ENCODE measurements at regions of chr2 and their contacts with region 1.

Region 1: GRCh38 chr2:73828818-73829570 is at the start of gene STAMBP:
- DNase-seq: peak; percentile 96 to 99 (median 98)
- ATAC-seq: peak; percentile 98 to 99
- H3K4me3 ChIP-seq: peak within 1 kb of the TSS; percentile 73
- H3K27ac ChIP-seq: peak within 1 kb of the TSS; percentile 93
- H3K4me1 ChIP-seq: peaks cover 3% of the 10 kb centered on the region
- H3K27me3 ChIP-seq: no peaks in the 10 kb centered on the region
- total RNA-seq, gene STAMBP: 33.6 to 48.0 (median 41.3) TPM

Region 2: DNA sequence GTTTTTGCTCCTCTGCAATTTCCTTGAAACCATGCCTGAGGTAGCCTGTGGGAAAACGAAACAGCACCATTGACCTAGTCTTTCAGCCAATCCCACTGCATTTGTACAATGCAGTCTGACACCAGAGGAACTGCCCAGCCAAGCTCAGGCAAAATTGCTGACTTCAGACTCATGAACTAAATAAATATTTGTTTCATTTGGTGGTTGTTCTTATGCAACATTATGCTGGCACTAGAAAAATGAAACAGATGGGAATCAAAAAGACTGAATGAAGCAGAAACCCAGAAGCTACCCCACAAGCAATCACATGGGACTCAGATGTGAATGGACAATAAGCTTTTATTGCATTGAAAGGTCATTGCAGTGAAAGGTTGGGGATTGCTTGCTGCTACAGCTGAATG is 188.5 kb before region 1 on chr2:
- intact Hi-C with region 1: no loop called
- DNase-seq: no peak
- ATAC-seq: peak; percentile 11 to 69
- H3K4me3 ChIP-seq: no peak overlapping the region
- H3K27ac ChIP-seq: no peak overlapping the region
- H3K4me1 ChIP-seq: no peaks in the 10 kb centered on the region
- H3K27me3 ChIP-seq: no peaks in the 10 kb centered on the region

Region 3: DNA sequence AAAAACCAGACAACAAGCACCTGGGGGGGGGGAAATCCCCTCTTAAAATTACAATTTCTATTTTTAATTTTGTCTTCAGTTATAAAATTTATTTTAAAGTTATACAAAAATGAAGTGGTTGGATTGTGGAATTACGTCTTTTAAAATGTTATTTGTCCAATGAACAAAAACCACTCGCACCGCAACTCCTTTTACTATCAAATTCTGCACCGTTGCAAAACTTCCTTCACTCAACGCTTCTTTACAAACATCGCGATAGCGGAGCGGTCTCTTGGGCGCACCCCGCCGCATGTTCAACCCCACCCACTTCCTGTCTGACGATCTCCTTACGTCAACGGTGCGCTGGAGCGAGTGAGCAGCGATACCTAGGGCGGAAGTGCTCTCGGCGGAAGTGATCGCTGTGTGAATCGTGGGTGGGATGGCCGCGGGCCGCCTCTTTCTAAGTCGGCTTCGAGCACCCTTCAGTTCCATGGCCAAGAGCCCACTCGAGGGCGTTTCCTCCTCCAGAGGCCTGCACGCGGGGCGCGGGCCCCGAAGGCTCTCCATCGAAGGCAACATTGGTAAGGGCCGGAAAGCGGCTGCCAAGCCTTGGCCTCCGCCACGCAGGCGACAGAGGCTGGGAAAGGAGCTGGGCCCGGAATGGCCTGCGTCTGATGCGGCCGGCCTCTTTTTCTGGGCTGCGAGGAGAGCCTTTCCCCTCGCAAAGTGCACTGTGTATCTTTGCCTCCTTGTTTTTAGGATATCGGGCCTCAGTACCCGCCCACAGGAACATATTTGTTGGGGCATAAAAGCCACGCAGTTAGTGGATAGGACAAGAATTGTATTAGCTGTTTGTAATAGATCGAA is 97.7 kb after region 1 on chr2 and contains the start of gene DGUOK:
- intact Hi-C with region 1: loop called in 1 of 4 experiments (anchors 10 kb)
- DNase-seq: peak; percentile 98 to 99 (median 98)
- ATAC-seq: peak; percentile 100
- H3K4me3 ChIP-seq: peak within 1 kb of the TSS; percentile 73
- H3K27ac ChIP-seq: peak within 1 kb of the TSS; percentile 84
- H3K4me1 ChIP-seq: peaks cover 8% of the 10 kb centered on the region
- H3K27me3 ChIP-seq: no peaks in the 10 kb centered on the region
- total RNA-seq, gene DGUOK: 20.2 to 29.0 (median 26.7) TPM

Region 4: DNA sequence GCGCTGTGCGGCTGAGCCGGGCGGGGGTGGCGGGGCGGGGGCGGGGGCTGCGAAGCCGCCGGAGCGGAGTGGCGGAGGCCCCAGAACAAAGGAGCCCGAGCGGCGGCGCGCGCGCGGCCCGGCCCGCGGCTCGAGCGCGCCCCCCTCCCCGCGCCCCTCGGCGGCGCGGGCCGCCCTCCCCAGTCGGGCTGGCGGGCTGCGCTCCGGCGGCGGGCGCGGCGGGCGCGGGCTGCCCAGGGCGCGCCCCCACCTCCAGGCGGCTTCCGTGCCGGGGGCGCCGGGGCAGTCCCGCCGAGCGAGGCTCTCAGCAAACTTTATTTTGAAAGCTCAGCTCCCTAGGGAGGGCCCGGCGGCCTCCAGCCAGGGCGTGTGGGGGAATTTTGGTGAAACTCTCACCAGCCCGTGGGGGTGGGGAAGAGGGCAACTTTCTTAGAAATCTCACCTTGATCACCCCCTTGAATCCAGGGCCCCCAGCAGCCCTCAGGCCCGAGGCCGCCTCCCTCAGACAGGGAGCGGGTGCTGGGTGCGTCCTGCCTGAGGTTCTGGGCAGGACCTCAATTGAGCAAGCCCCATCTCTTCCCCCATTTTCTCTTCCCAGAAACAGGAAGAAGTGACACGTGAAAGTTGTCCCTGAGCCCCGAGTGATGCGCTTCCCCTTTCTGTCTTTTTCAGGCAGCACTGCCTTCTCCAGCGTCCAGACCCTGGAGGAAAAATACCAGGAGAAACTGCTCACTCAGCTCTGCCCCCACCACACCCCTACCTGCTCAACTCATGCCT is 156.5 kb after region 1 on chr2:
- intact Hi-C with region 1: loop called in 1 of 4 experiments (anchors 10 kb)
- DNase-seq: peak; percentile 52 to 86 (median 83)
- ATAC-seq: peak; percentile 6 to 9
- H3K4me3 ChIP-seq: peak overlapping the region; percentile 96
- H3K27ac ChIP-seq: no peak overlapping the region
- H3K4me1 ChIP-seq: peaks cover 14% of the 10 kb centered on the region
- H3K27me3 ChIP-seq: no peaks in the 10 kb centered on the region

Region 5: DNA sequence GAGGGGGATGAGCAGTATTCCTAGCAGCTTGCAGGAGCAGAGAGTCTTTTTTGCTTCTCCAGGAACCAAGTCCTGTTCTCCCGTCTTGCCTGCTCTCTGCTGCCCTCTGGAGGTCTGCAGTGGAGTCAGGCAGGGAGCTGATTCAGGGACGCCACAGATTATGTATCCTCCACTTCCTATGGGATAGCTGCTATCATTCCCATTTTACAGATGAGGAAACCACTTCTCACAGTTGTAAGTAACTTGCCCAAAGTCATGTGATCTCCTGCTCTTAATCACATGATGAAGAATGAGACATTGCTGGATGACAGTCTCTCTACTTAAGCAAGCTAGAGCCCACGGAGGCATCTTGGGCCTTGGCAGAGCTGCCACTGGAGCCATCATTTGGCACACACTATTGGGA is 505.9 kb after region 1 on chr2:
- intact Hi-C with region 1: loop called in 1 of 4 experiments (anchors 10 kb)
- DNase-seq: peak; percentile 62 to 90 (median 88)
- ATAC-seq: peak; percentile 74 to 90
- H3K4me3 ChIP-seq: no peak overlapping the region
- H3K27ac ChIP-seq: no peak overlapping the region
- H3K4me1 ChIP-seq: no peaks in the 10 kb centered on the region
- H3K27me3 ChIP-seq: no peaks in the 10 kb centered on the region